Activated T-helper 1 cell treated with anti-CD3 and anti-CD28 coated beads, Interleukin-12 subunit alpha, Interleukin-12 subunit beta, Interleukin-2, Interleukin-4 antibody, amounts not matched to agents 30 ng/mL and 10 ng/mL and 1 ng/mL, durations not matched to agents 14 hours and 24 hours and 36 hours (primary cell): ENCODE measurements at regions of chr17 and their contacts with region 1.

Region 1: DNA sequence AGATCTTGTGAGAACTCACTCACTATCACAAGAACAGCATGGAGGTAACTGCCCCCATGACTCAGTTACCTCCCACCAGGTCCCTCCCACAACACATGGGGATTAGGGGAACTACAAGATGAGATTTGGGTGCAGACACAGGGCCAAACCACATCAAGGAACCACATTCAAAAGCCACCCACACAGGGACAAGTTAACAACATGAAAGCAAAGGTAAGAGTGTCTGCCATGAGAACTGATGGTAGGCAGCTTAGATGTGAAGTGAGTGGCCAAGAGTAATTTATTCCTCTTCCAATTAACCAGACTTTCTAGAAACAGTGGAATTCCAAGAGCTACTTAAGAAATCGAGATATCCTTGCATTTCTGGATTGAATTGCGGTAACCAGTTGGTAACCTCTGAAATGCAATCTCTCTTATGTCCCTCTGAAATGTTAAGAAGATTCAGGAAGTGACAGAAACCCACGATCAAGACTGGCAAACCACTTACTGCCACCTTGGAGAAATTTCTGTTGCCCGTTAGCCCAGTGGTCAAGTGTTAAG is 167.4 kb upstream of the CACNG5 start:
- DNase-seq: peak; percentile 61
- H3K4me3 Mint-ChIP-seq: peak overlapping the region; percentile 67
- H3K27ac Mint-ChIP-seq: peak overlapping the region; percentile 88
- H3K4me1 Mint-ChIP-seq: peaks cover 76% of the 10 kb centered on the region
- H3K27me3 Mint-ChIP-seq: peaks cover 3% of the 10 kb centered on the region

Region 2: GRCh38 chr17:66580184-66580955 is 87.2 kb before region 1 on chr17:
- intact Hi-C with region 1: no loop called
- DNase-seq: no peak
- H3K4me3 Mint-ChIP-seq: no peak overlapping the region
- H3K27ac Mint-ChIP-seq: no peak overlapping the region
- H3K4me1 Mint-ChIP-seq: peaks cover 6% of the 10 kb centered on the region
- H3K27me3 Mint-ChIP-seq: no peaks in the 10 kb centered on the region

Region 3: GRCh38 chr17:66655861-66656260 is 11.7 kb before region 1 on chr17:
- intact Hi-C with region 1: loop called (anchors 1 kb)
- DNase-seq: no peak
- H3K4me3 Mint-ChIP-seq: peak overlapping the region; percentile 46
- H3K27ac Mint-ChIP-seq: peak overlapping the region; percentile 81
- H3K4me1 Mint-ChIP-seq: peaks cover 55% of the 10 kb centered on the region
- H3K27me3 Mint-ChIP-seq: no peaks in the 10 kb centered on the region

Region 4: GRCh38 chr17:66727639-66728570 is 60.3 kb after region 1 on chr17:
- intact Hi-C with region 1: no loop called
- DNase-seq: peak; percentile 31
- H3K4me3 Mint-ChIP-seq: no peak overlapping the region
- H3K27ac Mint-ChIP-seq: peak overlapping the region; percentile 40
- H3K4me1 Mint-ChIP-seq: peaks cover 26% of the 10 kb centered on the region
- H3K27me3 Mint-ChIP-seq: no peaks in the 10 kb centered on the region